B cell (primary cell): ENCODE measurements at regions of chr1 and their contacts with region 1.

Region 1: GRCh38 chr1:13772271-13772670 is 72.3 kb downstream of the PRDM2 start:
- DNase-seq: no peak
- ATAC-seq: no peak
- H3K4me3 ChIP-seq: no peak overlapping the region
- H3K4me3 Mint-ChIP-seq: no peak overlapping the region
- H3K27ac ChIP-seq: no peak overlapping the region
- H3K27ac Mint-ChIP-seq: no peak overlapping the region
- H3K4me1 ChIP-seq: peaks cover 12% of the 10 kb centered on the region in 2 donors
- H3K4me1 Mint-ChIP-seq: peaks cover 37% of the 10 kb centered on the region
- H3K27me3 ChIP-seq: no peaks in the 10 kb centered on the region
- H3K27me3 Mint-ChIP-seq: no peaks in the 10 kb centered on the region
- CTCF ChIP-seq: no peak

Region 2: GRCh38 chr1:13759088-13759487 is 13.2 kb before region 1 on chr1:
- CTCF ChIA-PET with region 1: interaction called, 7 read pairs
- POLR2A ChIA-PET with region 1: interaction called, 10 read pairs
- intact Hi-C with region 1: no loop called
- DNase-seq: no peak
- ATAC-seq: no peak
- H3K4me3 ChIP-seq: no peak overlapping the region
- H3K4me3 Mint-ChIP-seq: peak overlapping the region; percentile 54
- H3K27ac ChIP-seq: peak overlapping the region in 1 of 2 donors; percentile 4
- H3K27ac Mint-ChIP-seq: peak overlapping the region; percentile 65
- H3K4me1 ChIP-seq: peaks cover 66 to 78% of the 10 kb centered on the region in 2 donors
- H3K4me1 Mint-ChIP-seq: peaks cover 85% of the 10 kb centered on the region
- H3K27me3 ChIP-seq: no peaks in the 10 kb centered on the region
- H3K27me3 Mint-ChIP-seq: no peaks in the 10 kb centered on the region
- CTCF ChIP-seq: no peak

Region 3: DNA sequence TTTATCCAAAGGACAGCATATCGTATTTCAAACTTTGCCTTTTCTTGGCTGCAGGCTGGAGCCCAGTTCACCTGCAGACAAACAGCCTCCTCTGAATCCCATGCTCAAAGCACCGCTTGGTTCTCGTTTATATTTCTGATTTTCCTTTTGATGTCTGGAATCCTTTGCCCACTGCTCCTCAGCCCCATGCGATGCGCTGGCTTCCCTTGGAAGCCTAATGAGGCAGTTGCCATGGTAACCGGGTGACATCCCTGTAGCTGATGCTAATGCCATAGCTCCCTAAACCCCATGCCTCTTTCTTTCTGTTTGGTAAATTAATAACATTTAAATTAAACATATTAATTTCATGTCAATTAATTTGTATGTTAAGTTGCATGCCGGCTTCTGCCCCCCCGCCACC is 254.8 kb after region 1 on chr1:
- CTCF ChIA-PET with region 1: no interaction called
- POLR2A ChIA-PET with region 1: no interaction called
- intact Hi-C with region 1: no loop called
- DNase-seq: no peak
- ATAC-seq: no peak
- H3K4me3 ChIP-seq: no peak overlapping the region
- H3K4me3 Mint-ChIP-seq: no peak overlapping the region
- H3K27ac ChIP-seq: no peak overlapping the region
- H3K27ac Mint-ChIP-seq: no peak overlapping the region
- H3K4me1 ChIP-seq: no peaks in the 10 kb centered on the region
- H3K4me1 Mint-ChIP-seq: no peaks in the 10 kb centered on the region
- H3K27me3 ChIP-seq: peaks cover 0 to 4% (median 0%) of the 10 kb centered on the region in 4 experiments
- H3K27me3 Mint-ChIP-seq: peaks cover 4% of the 10 kb centered on the region
- CTCF ChIP-seq: no peak